ENCODE measurements at regions of chr1 and their contacts with region 1.

Region 1: GRCh38 chr1:239951511-239952140 is 140.1 kb upstream of the FMN2 start:
- DNase-seq: peak in 1 of 2 experiments; percentile 72
- H3K4me3 ChIP-seq: no peak overlapping the region
- H3K27ac ChIP-seq: no peak overlapping the region
- H3K4me1 ChIP-seq: no peaks in the 10 kb centered on the region
- H3K27me3 ChIP-seq: no peaks in the 10 kb centered on the region
- CTCF ChIP-seq: peak in 2 of 3 experiments; percentile 66 to 78; a peak in 3 of 4 replicates
- EP300 ChIP-seq: no peak
- POLR2A ChIP-seq: no peak
- RAD21 ChIP-seq: peak; percentile 88 to 92

Region 2: DNA sequence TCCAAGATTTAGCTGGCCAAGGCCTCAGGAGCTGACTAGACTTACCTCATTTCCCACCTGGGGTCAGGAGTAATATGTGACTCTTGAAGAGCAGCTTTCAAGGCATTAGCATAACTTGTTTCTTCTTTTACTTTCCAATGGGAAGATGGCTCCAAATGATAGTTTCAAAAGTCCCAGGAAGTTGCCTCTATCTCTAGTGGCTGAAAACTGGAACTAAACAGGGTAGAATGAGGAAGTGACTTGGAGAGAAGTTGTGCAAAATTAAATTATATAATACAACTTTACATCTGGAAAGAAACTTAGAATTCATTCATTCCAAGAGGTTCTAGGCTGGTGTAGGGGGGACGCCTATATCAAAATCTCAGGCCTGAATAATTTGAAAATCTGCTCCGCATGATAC is 110.0 kb before region 1 on chr1:
- CTCF ChIA-PET with region 1: no interaction called
- POLR2A ChIA-PET with region 1: no interaction called
- DNase-seq: no peak
- H3K4me3 ChIP-seq: no peak overlapping the region
- H3K27ac ChIP-seq: no peak overlapping the region
- H3K4me1 ChIP-seq: no peaks in the 10 kb centered on the region
- H3K27me3 ChIP-seq: no peaks in the 10 kb centered on the region
- CTCF ChIP-seq: no peak
- EP300 ChIP-seq: no peak
- POLR2A ChIP-seq: no peak
- RAD21 ChIP-seq: no peak

Region 3: GRCh38 chr1:239906394-239906793 is 45.2 kb before region 1 on chr1:
- CTCF ChIA-PET with region 1: interaction called, 20 read pairs
- POLR2A ChIA-PET with region 1: no interaction called
- DNase-seq: no peak
- H3K4me3 ChIP-seq: no peak overlapping the region
- H3K27ac ChIP-seq: no peak overlapping the region
- H3K4me1 ChIP-seq: no peaks in the 10 kb centered on the region
- H3K27me3 ChIP-seq: no peaks in the 10 kb centered on the region
- CTCF ChIP-seq: no peak
- EP300 ChIP-seq: no peak
- POLR2A ChIP-seq: no peak
- RAD21 ChIP-seq: no peak

Region 4: DNA sequence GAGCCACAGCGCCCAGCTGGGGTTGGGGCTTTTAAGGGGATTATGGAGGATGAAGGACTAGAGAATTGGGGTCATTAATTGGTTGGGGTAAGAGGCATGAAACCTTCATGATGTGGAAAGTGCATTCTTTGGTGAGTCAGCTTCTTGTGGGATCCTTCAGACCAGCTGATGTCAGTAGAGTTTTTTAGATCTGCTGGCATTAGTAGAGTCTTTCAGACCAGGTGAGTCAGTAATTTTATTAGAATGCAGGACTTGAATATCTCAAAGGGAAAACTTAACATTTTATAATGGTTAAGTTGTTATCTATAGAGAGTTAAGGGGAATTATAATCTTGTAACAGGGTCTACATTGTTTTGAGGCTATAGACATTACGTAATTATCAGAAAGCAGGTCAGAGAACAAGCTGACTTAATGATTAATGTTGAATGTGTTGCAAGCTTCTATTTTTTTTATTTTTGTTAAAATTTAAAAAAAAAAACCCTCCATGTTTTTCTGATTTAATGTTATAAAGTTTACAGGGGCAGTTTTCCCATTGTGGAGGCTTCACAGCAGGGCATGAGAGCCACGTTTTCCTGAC is 20.9 kb before region 1 on chr1:
- CTCF ChIA-PET with region 1: interaction called, 23 read pairs
- POLR2A ChIA-PET with region 1: no interaction called
- DNase-seq: no peak
- H3K4me3 ChIP-seq: no peak overlapping the region
- H3K27ac ChIP-seq: no peak overlapping the region
- H3K4me1 ChIP-seq: no peaks in the 10 kb centered on the region
- H3K27me3 ChIP-seq: no peaks in the 10 kb centered on the region
- CTCF ChIP-seq: no peak
- EP300 ChIP-seq: no peak
- POLR2A ChIP-seq: no peak
- RAD21 ChIP-seq: no peak

Region 5: DNA sequence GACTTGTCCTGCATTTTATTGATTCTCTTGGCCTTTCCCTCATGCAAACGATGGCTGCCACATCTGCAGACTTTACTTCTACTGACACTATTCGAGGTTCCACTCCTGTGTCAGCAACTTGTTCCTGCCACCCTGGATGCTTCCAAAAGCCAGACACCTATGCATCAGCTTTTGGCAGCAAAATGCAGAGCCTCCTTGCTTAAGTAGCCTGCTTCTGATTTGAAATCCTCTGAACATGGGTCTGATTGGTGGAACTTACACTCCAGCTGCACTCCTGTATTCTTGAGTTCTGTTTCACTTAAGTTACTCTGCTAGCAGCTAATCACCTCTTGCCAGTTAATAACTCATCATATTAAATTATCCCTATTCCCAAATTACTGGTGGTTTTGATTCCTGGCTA is 12.0 kb before region 1 on chr1:
- CTCF ChIA-PET with region 1: interaction called, 21 read pairs
- POLR2A ChIA-PET with region 1: no interaction called
- DNase-seq: no peak
- H3K4me3 ChIP-seq: no peak overlapping the region
- H3K27ac ChIP-seq: no peak overlapping the region
- H3K4me1 ChIP-seq: no peaks in the 10 kb centered on the region
- H3K27me3 ChIP-seq: no peaks in the 10 kb centered on the region
- CTCF ChIP-seq: no peak
- EP300 ChIP-seq: no peak
- POLR2A ChIP-seq: no peak
- RAD21 ChIP-seq: no peak

Region 6: DNA sequence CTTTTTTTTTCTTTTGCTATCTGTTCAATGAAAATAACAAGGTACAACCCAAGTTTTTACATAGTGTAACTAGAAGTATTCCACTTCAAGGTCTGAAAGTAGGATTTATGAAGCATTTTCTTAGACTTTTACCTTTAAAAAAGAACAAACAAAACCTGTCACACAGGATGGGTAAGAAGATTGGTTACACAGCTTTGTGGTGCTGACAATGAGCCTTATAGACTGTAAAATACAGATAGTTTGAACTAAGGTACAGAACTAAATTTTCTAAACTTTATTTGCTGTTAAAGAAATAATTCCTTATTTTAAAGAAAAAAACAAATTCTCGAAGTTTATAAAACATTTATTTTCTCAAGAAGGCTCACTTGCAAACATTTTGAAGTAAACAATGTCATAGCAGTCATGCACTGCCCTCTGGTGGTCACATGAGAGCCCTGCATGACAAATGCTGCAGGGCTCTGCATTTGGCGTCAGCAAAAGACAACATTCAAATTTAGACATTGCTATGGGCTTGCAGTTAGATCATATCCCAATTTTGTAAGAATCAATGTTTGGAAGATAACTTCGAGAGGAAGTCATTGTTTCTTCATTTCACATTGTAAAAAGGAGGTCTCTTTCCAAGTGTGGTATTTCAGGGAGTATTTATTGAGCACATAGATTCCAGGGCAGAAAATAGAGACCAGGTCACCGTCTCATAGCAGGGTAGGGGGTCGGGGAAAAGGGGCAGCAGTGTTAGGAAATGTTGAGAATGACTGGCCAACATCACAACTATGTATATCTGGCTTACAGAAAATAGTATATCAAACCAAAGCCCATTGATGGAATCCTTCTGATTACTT is 24.7 kb after region 1 on chr1:
- CTCF ChIA-PET with region 1: interaction called, 131 read pairs
- POLR2A ChIA-PET with region 1: no interaction called
- DNase-seq: peak in 1 of 2 experiments; percentile 66
- H3K4me3 ChIP-seq: no peak overlapping the region
- H3K27ac ChIP-seq: no peak overlapping the region
- H3K4me1 ChIP-seq: no peaks in the 10 kb centered on the region
- H3K27me3 ChIP-seq: peaks cover 0 to 1% (median 0%) of the 10 kb centered on the region in 4 experiments; a peak in 1 of 7 replicates
- CTCF ChIP-seq: peak; percentile 68 to 86 (median 79)
- EP300 ChIP-seq: no peak
- POLR2A ChIP-seq: no peak
- RAD21 ChIP-seq: peak; percentile 89 to 91

Region 7: DNA sequence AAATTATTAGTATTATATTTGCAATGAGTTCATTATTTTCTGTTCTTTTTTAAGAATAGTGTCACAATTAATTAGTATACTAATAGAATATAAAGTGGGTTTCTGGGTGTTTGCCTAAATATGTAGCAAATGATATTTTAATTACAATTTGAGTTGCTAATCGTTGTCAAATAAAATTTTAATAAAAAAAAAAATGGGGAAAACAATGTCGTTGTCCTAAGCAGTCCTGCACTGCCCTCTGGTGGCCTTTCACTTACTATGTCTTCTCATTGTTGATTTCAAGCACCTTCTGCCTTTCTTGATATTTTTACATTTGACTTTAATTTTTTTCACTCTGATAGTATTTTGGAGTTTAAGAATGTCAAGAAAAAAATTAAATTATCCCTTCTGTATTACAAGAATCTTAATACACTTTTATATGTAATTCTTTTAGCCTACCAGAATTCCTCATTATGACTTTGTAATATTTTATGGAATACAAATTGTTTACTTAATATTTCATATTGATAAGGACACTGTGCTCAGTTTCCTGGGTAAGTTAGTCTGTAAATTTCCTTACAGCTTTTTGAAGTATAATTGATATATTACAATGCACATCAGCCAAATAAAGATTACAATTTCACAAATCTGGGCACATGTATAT is 35.6 kb after region 1 on chr1:
- CTCF ChIA-PET with region 1: interaction called, 69 read pairs
- POLR2A ChIA-PET with region 1: no interaction called
- DNase-seq: no peak
- H3K4me3 ChIP-seq: no peak overlapping the region
- H3K27ac ChIP-seq: no peak overlapping the region
- H3K4me1 ChIP-seq: no peaks in the 10 kb centered on the region
- H3K27me3 ChIP-seq: no peaks in the 10 kb centered on the region
- CTCF ChIP-seq: peak in 2 of 3 experiments; percentile 42 to 51; a peak in 3 of 4 replicates
- EP300 ChIP-seq: no peak
- POLR2A ChIP-seq: no peak
- RAD21 ChIP-seq: peak; percentile 69 to 71

Region 8: GRCh38 chr1:240004086-240004749 is 52.6 kb after region 1 on chr1:
- CTCF ChIA-PET with region 1: interaction called, 56 read pairs
- POLR2A ChIA-PET with region 1: no interaction called
- DNase-seq: peak in 1 of 2 experiments; percentile 58
- H3K4me3 ChIP-seq: no peak overlapping the region
- H3K27ac ChIP-seq: no peak overlapping the region
- H3K4me1 ChIP-seq: no peaks in the 10 kb centered on the region
- H3K27me3 ChIP-seq: no peaks in the 10 kb centered on the region
- CTCF ChIP-seq: peak; percentile 57 to 75 (median 67)
- EP300 ChIP-seq: no peak
- POLR2A ChIP-seq: no peak
- RAD21 ChIP-seq: peak; percentile 27 to 37